Dorsolateral prefrontal cortex (tissue), 120 donors: ENCODE measurements at regions of chr2 and their contacts with region 1.

Region 1: GRCh38 chr2:72378753-72379382 is 231.2 kb upstream of the CYP26B1 start:
- DNase-seq: no peak
- H3K4me3 ChIP-seq: no peak overlapping the region
- H3K27ac ChIP-seq: no peak overlapping the region
- H3K27me3 ChIP-seq: no peaks in the 10 kb centered on the region
- CTCF ChIP-seq: no peak

Region 2: DNA sequence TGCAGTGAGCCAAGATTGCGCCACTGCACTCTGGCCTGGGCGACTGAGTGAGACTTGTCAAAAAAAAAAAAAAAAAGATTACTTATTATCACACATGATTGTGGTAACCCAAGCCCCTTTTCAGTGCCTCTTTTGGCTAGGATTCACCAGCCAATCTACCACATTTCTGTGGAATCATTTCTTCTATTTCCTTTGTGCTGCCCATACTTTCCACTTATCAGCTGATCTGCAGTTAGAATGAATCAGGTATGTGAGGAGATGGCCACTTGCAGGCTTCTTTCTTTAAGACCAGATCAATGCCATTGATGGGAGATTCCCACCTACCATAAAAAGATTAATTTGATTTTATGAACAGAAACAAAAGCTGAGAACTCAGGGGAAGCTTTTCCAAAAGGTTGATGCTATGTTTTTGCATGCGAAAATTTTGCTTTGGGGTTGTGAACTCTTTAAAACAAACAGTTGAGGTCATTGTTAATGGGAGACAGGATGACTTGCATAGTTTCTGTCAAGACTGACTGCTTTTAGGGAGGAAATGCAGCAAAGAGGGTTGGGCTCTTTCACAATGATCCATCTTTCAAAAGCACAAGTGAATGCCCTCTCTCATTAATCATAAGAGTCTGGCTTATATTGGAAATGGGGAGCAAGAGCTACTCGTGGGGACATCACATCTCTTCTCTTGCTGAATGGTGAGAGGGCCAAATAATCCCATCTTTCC is 164.3 kb before region 1 on chr2:
- intact Hi-C with region 1: no loop called
- DNase-seq: no peak
- H3K4me3 ChIP-seq: no peak overlapping the region
- H3K27ac ChIP-seq: no peak overlapping the region
- H3K27me3 ChIP-seq: no peaks in the 10 kb centered on the region
- CTCF ChIP-seq: no peak

Region 3: DNA sequence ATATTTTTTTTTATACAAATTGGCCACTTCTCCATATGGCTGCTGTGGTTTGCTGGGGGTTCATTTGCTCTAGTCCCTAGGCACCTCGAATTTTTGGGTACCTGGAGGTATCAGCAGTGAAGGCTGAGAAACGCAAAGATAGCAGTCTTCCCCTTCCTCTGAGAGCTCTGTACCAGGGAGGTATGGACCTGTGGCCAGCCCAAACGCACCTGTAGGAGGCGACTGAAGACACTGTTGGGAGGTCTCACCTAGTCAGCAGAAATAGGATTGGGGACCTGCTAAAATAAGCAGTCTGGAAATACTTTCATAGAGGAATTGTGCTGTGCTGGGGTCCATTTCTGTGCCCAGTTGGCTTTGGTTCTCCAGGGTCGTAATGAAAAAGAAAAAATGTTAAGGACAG is 61.0 kb after region 1 on chr2:
- intact Hi-C with region 1: loop called in 1 of 2 experiments (anchors 10 kb)
- DNase-seq: no peak
- H3K4me3 ChIP-seq: no peak overlapping the region
- H3K27ac ChIP-seq: no peak overlapping the region
- H3K27me3 ChIP-seq: no peaks in the 10 kb centered on the region
- CTCF ChIP-seq: no peak